Activated B cell treated with CpG ODN at 0.5 μM for 24 hours (primary cell): ENCODE measurements at regions of chr4 and their contacts with region 1.

Region 1: DNA sequence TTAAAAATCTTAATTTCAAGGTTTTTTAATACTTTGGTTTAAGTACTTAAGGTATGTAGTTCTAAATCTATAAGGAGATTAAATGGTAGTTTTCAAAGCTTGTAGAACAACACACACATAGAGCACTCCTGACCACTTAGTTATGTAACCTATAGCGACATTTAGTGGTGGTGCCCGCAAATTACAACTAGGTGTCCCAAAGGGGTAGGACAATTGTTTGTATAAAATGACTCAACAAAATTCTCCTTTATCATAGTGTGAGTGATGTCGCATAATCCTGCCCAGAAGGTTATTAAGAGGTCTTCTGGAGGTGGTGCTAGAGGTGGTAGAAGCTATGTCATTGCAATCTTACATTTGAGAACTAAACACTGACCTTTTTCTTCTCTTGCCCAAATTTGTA is 373.0 kb upstream of the RASGEF1B start:
- DNase-seq: peak; percentile 33
- ATAC-seq: peak; percentile 98
- H3K4me3 Mint-ChIP-seq: no peak overlapping the region
- H3K27ac Mint-ChIP-seq: no peak overlapping the region
- H3K4me1 Mint-ChIP-seq: peaks cover 4% of the 10 kb centered on the region
- H3K27me3 Mint-ChIP-seq: no peaks in the 10 kb centered on the region
- CTCF ChIP-seq: peak; percentile 69

Region 2: DNA sequence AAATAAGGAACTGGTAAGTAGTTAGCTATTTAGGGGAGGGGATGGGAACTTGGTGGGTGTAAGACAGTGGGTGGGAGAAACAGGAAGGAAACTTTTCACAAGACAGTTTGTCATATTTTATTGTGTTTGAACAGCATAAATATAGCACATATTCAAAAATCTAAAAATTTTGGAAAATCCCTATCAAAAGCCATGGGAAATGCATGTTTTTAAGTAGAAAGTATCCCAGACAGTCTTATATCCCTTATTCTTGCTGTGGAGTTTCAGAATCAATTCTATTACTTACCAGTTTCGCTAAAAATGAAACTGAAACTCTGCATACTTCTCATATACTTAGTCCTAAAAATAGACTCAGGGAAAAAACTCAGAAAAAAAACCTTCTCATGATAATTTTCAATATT is 350.7 kb before region 1 on chr4:
- CTCF ChIA-PET with region 1: interaction called, 4 read pairs
- POLR2A ChIA-PET with region 1: no interaction called
- intact Hi-C with region 1: loop called (anchors 1 kb)
- DNase-seq: no peak
- ATAC-seq: peak; percentile 33
- H3K4me3 Mint-ChIP-seq: peak overlapping the region; percentile 57
- H3K27ac Mint-ChIP-seq: peak overlapping the region; percentile 82
- H3K4me1 Mint-ChIP-seq: peaks cover 55% of the 10 kb centered on the region
- H3K27me3 Mint-ChIP-seq: no peaks in the 10 kb centered on the region
- CTCF ChIP-seq: no peak

Region 3: GRCh38 chr4:81606801-81607501 is 237.8 kb before region 1 on chr4:
- CTCF ChIA-PET with region 1: interaction called, 5 read pairs
- POLR2A ChIA-PET with region 1: no interaction called
- intact Hi-C with region 1: loop called (anchors 1 kb)
- DNase-seq: no peak
- ATAC-seq: peak; percentile 54
- H3K4me3 Mint-ChIP-seq: peak overlapping the region; percentile 55
- H3K27ac Mint-ChIP-seq: peak overlapping the region; percentile 86
- H3K4me1 Mint-ChIP-seq: peaks cover 58% of the 10 kb centered on the region
- H3K27me3 Mint-ChIP-seq: no peaks in the 10 kb centered on the region
- CTCF ChIP-seq: no peak

Region 4: GRCh38 chr4:81724925-81725329 is 119.8 kb before region 1 on chr4:
- CTCF ChIA-PET with region 1: no interaction called
- POLR2A ChIA-PET with region 1: no interaction called
- intact Hi-C with region 1: loop called (anchors 1 kb)
- DNase-seq: peak; percentile 18
- ATAC-seq: peak; percentile 93
- H3K4me3 Mint-ChIP-seq: no peak overlapping the region
- H3K27ac Mint-ChIP-seq: peak overlapping the region; percentile 3
- H3K4me1 Mint-ChIP-seq: peaks cover 18% of the 10 kb centered on the region
- H3K27me3 Mint-ChIP-seq: peaks cover 3% of the 10 kb centered on the region
- CTCF ChIP-seq: no peak

Region 5: GRCh38 chr4:82201805-82202641 is 357.3 kb after region 1 on chr4:
- CTCF ChIA-PET with region 1: no interaction called
- POLR2A ChIA-PET with region 1: no interaction called
- intact Hi-C with region 1: loop called (anchors 1 kb)
- DNase-seq: no peak
- ATAC-seq: peak; percentile 50
- H3K4me3 Mint-ChIP-seq: no peak overlapping the region
- H3K27ac Mint-ChIP-seq: no peak overlapping the region
- H3K4me1 Mint-ChIP-seq: no peaks in the 10 kb centered on the region
- H3K27me3 Mint-ChIP-seq: peaks cover 16% of the 10 kb centered on the region
- CTCF ChIP-seq: no peak